Thyroid gland (tissue), 4 donors: ENCODE measurements at regions of chr20 and their contacts with region 1.

Region 1: GRCh38 chr20:37007898-37008649 is 56.6 kb upstream of the SAMHD1 start:
- DNase-seq: peak; percentile 33 to 49
- H3K4me3 ChIP-seq: no peak overlapping the region
- H3K27ac ChIP-seq: peak overlapping the region in 1 of 3 donors; percentile 2
- H3K4me1 ChIP-seq: peaks cover 7 to 10% of the 10 kb centered on the region in 2 donors
- H3K27me3 ChIP-seq: no peaks in the 10 kb centered on the region
- CTCF ChIP-seq: peak in 5 of 6 experiments; percentile 21 to 81 (median 50)
- POLR2A ChIP-seq: no peak

Region 2: GRCh38 chr20:37192137-37192854 is 184.2 kb after region 1 on chr20:
- intact Hi-C with region 1: loop called (anchors 10 kb)
- DNase-seq: peak; percentile 89
- H3K4me3 ChIP-seq: no peak overlapping the region
- H3K27ac ChIP-seq: no peak overlapping the region
- H3K4me1 ChIP-seq: peaks cover 5 to 23% of the 10 kb centered on the region in 2 donors
- H3K27me3 ChIP-seq: no peaks in the 10 kb centered on the region
- CTCF ChIP-seq: peak; percentile 75 to 95 (median 88)
- POLR2A ChIP-seq: no peak